ENCODE measurements at regions of chr10 and their contacts with region 1.

Region 1: GRCh38 chr10:92547641-92548040 is 26.3 kb downstream of the IDE start:
- DNase-seq: no peak

Region 2: GRCh38 chr10:93503075-93503474 is 955.4 kb after region 1 on chr10:
- intact Hi-C with region 1: loop called in 1 of 2 experiments (anchors 5 kb)
- DNase-seq: no peak